Heart left ventricle (tissue), 16 donors: ENCODE measurements at regions of chr3 and their contacts with region 1.

Region 1: DNA sequence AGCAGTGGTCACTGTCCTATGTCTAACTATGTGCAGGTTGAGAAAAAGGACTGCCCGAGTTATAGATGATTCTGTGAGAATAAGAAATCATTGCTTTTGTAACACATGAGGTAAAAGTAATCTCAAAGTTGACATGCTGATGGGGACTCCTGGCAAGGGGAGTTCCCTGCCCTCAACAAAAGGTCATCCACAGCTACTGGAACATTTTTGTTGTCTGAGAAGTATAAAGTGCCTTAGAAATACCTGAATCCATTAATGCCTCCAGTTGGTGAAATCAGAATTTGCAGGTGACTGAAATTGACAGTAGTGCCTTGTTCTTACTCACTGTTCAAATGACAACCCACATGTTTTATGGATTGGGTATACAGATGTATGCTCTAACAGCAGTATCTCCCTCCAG is 43.7 kb upstream of the RBM5 start:
- DNase-seq: no peak
- ATAC-seq: no peak
- H3K4me3 ChIP-seq: no peak overlapping the region
- H3K27ac ChIP-seq: no peak overlapping the region
- H3K4me1 ChIP-seq: peaks cover 0 to 6% (median 0%) of the 10 kb centered on the region in 12 donors
- H3K27me3 ChIP-seq: no peaks in the 10 kb centered on the region
- CTCF ChIP-seq: no peak
- POLR2A ChIP-seq: no peak

Region 2: DNA sequence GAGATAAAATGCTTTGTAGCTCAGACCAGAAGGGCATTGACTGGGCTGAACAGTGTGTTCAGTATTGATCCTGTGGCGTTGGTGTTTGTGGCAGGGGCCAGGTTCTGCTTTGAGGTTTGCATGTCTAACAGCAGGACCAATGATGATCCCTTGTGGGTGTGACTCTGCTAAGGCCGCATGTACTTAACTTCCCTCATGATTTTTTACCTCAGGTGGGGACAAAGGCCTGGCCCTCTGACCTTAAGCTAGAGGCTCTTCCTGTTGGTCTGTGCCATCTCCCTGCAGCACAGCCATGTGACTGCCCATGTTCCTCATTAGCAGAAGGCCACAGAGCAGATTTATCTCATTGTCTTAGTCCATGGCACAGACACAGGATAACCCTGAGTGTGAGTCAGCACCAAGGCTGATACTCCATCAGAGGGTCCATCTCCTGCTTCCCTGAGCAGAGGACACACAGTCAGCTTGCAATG is 525.0 kb before region 1 on chr3:
- intact Hi-C with region 1: loop called in 1 of 10 experiments (anchors 10 kb)
- DNase-seq: no peak
- ATAC-seq: no peak
- H3K4me3 ChIP-seq: no peak overlapping the region
- H3K27ac ChIP-seq: peak overlapping the region in 1 of 12 donors; percentile 14
- H3K4me1 ChIP-seq: peaks cover 3 to 59% (median 17%) of the 10 kb centered on the region in 12 donors
- H3K27me3 ChIP-seq: no peaks in the 10 kb centered on the region
- CTCF ChIP-seq: no peak
- POLR2A ChIP-seq: no peak